Activated naive CD4-positive, alpha-beta T cell treated with anti-CD3 and anti-CD28 coated beads for 36 hours (primary cell): ENCODE measurements at regions of chr1 and their contacts with region 1.

Region 1: GRCh38 chr1:180631766-180632325 is at the start of gene XPR1:
- DNase-seq: peak; percentile 99
- H3K4me3 Mint-ChIP-seq: no peak within 1 kb of the TSS
- H3K27ac Mint-ChIP-seq: peak within 1 kb of the TSS; percentile 77
- H3K4me1 Mint-ChIP-seq: peaks cover 12% of the 10 kb centered on the region
- H3K27me3 Mint-ChIP-seq: no peaks in the 10 kb centered on the region
- total RNA-seq, gene XPR1: 14.8 to 18.1 TPM

Region 2: DNA sequence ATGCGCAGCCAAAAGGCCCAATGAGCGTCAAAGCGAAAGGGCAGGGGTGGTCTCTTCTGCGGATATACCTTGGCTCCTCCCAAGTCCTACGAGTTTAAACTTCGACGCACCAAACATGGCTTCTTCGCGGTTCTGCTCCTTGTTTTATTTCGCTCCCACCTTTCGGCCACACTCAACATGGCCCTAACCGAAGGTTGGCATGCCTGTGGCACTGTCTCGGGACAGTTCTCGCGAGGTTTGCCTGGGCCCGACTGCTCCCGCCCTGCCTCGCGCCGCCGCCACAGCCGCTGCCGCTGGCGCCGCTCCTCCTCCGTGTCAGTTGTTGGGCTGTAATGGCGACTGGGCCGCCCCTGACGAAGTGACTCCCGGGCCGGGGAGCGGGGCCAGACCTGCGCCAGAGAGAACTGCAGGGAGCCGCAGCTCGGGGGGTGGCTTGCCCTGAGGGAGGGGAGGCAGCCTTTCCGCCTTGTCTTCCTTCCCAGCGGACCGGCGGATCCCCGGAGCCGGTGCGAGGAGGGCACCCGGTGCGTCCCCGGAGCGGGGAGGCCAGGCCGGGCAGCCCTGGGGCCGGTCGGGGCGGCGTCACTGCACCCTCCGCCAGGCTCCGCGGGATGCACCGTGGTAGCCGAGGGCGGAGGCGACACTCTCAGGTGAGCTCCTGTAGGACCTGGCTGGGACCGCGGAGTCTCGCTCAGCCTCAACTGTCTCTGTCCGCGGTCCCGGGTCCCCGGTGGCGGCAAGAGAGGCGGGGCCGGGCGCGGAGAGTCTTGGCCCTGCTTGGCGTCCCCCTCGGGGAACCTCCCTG is 677.2 kb before region 1 on chr1 and contains the start of gene CEP350:
- CTCF ChIA-PET with region 1: no interaction called
- intact Hi-C with region 1: loop called (anchors 5 kb)
- DNase-seq: peak; percentile 99
- H3K4me3 Mint-ChIP-seq: peak within 1 kb of the TSS; percentile 85
- H3K27ac Mint-ChIP-seq: peak within 1 kb of the TSS; percentile 95
- H3K4me1 Mint-ChIP-seq: peaks cover 41% of the 10 kb centered on the region
- H3K27me3 Mint-ChIP-seq: no peaks in the 10 kb centered on the region
- total RNA-seq, gene CEP350: 30.3 to 36.0 TPM

Region 3: DNA sequence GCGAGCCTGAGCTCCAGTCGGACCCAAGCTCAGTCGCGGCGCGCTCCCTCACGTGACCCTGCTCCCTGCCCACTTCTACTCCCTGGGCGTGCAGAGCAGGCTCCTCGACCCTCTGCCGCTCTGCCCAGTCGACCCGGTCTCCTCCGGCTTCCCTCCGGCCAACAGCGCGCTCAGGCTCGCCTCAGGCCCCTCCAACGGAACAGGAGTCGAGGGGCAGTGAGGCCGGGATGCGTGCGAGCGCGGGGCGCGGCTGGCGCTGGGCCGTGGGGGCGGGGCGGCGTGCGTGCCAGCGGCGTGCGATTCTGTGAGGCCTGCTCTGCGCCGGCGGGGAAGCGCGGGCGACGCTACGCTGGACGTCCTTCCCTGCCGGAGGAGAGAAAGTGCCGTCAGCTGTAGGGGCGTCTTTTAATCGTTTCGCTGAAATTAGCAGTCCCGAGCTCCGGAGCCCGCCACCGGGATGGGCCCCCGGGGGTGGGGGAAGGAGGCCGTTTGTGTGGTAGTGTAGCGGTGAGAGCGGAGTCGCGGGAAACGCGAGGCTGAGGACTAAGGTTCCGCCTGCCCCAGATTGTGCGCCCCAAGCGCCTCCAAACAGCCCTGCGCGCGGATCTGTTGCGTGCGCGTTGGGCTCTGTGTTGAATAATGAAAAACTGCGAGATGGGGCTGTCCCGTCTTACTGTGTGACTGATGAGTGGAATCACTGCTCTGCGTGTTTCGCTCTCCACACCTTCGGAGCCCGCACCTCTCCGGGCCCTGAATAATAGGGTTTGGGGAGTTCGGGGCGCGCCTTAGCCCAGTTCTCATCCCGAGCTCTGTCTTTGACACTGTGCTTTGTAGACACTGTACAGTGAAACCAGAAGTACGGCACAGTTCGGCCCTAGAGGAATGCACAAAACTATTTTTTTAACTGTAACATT is 129.2 kb before region 1 on chr1 and contains the start of gene ACBD6:
- CTCF ChIA-PET with region 1: no interaction called
- intact Hi-C with region 1: loop called (anchors 1 kb)
- DNase-seq: peak; percentile 92
- H3K4me3 Mint-ChIP-seq: peak within 1 kb of the TSS; percentile 98
- H3K27ac Mint-ChIP-seq: peak within 1 kb of the TSS; percentile 93
- H3K4me1 Mint-ChIP-seq: peaks cover 34% of the 10 kb centered on the region
- H3K27me3 Mint-ChIP-seq: no peaks in the 10 kb centered on the region
- total RNA-seq, gene ACBD6: 31.1 to 32.9 TPM

Region 4: DNA sequence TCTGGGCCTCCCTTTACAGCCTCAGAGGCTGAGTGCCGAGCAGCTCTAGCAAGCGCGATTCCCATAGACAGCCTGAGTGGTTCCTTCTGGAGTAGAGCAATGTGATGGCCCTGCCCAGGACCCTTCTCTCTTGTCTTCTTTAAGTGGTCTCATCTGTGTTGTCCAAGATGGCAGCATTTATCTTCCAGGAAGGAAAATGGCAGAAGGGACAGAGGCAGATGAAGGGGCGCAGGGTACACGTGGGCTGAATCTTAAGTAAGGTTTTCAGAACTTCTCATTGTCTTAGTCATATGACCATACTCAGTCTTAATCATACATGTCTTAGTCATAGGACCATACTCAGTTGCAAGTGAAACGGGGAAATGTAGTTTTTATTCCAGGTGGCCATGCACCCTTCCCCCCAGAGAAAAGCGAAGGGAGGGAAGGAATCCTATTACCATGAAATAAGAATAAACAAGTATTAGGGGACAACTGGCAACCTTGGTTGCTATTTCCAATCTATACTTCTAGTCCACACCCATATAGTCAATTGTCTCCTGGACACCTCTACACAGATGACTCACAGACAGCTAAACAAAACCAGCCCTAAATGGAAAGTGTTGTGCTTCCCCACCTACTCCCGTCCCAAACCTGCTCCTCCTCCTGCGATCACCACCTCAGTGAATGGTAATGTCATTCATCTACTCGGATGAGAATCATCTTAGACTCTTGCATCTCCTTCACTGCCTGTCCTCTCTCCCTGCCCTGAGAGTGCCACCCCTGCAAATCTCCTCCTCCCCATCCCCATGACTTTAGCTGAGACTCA is 59.8 kb before region 1 on chr1:
- CTCF ChIA-PET with region 1: no interaction called
- intact Hi-C with region 1: loop called (anchors 1 kb)
- DNase-seq: peak; percentile 67
- H3K4me3 Mint-ChIP-seq: no peak overlapping the region
- H3K27ac Mint-ChIP-seq: peak overlapping the region; percentile 72
- H3K4me1 Mint-ChIP-seq: peaks cover 25% of the 10 kb centered on the region
- H3K27me3 Mint-ChIP-seq: peaks cover 10% of the 10 kb centered on the region

Region 5: DNA sequence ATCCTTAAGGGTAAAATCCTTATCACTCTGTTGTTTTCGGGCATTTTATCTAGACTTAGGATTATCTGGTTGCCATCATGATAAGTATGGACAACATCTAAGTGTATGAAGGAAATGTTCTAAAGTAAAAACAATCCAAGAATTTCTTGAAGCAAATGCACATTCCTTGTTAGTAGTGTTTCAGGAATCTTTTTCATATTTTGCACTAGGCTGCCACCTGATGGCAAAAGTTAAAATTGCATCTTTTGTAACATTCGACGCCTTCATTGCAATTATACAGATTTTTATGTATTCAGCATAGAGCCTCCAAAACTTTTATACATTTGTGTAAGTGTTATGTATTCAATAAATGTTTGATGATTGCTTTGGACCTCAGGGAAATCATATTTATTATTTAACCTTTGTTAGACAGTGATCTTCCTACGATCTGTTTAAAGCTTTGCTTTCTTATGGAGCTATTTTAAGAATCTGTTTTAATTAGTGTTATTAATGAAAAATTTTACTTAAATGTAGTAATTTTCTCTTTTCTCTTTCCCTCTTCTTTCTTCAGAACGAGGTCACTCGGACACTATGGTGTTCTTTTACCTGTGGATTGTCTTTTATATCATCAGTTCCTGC is 231.4 kb after region 1 on chr1:
- CTCF ChIA-PET with region 1: interaction called, 16 read pairs
- intact Hi-C with region 1: loop called (anchors 5 kb)
- DNase-seq: peak; percentile 34
- H3K4me3 Mint-ChIP-seq: no peak overlapping the region
- H3K27ac Mint-ChIP-seq: no peak overlapping the region
- H3K4me1 Mint-ChIP-seq: peaks cover 2% of the 10 kb centered on the region
- H3K27me3 Mint-ChIP-seq: no peaks in the 10 kb centered on the region

Region 6: DNA sequence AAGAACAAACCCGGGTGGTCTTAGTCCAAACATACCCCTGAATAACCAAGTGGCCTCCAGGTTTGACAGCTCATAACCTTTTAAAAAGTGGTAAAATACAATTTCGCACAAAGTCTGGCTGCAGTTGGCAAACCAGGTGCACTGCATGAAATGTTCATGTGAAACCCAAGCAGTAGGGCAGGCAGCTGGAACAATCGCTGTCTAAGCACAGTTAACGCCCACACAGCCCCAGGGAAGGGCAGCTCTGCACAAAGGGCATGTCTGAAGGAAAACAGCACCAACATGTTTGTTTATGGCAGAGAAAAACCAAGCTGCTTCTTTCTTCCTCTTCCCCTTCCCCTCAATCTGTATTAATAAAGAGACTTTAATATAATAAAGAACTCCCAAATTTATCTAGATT is 330.3 kb after region 1 on chr1:
- CTCF ChIA-PET with region 1: no interaction called
- intact Hi-C with region 1: no loop called
- DNase-seq: no peak
- H3K4me3 Mint-ChIP-seq: no peak overlapping the region
- H3K27ac Mint-ChIP-seq: no peak overlapping the region
- H3K4me1 Mint-ChIP-seq: no peaks in the 10 kb centered on the region
- H3K27me3 Mint-ChIP-seq: no peaks in the 10 kb centered on the region

Region 7: GRCh38 chr1:181166377-181167196 is 534.7 kb after region 1 on chr1:
- CTCF ChIA-PET with region 1: no interaction called
- intact Hi-C with region 1: loop called (anchors 2 kb)
- DNase-seq: peak; percentile 88
- H3K4me3 Mint-ChIP-seq: no peak overlapping the region
- H3K27ac Mint-ChIP-seq: no peak overlapping the region
- H3K4me1 Mint-ChIP-seq: peaks cover 5% of the 10 kb centered on the region
- H3K27me3 Mint-ChIP-seq: no peaks in the 10 kb centered on the region

Region 8: GRCh38 chr1:182029379-182030331 is 1397.8 kb after region 1 on chr1:
- CTCF ChIA-PET with region 1: no interaction called
- intact Hi-C with region 1: loop called (anchors 1 kb)
- DNase-seq: peak; percentile 99
- H3K4me3 Mint-ChIP-seq: peak overlapping the region; percentile 95
- H3K27ac Mint-ChIP-seq: peak overlapping the region; percentile 95
- H3K4me1 Mint-ChIP-seq: peaks cover 9% of the 10 kb centered on the region
- H3K27me3 Mint-ChIP-seq: no peaks in the 10 kb centered on the region